ENCODE measurements at regions of chr4 and their contacts with region 1.

Region 1: GRCh38 chr4:30461218-30461617 is 259.0 kb upstream of the PCDH7 start:
- DNase-seq: peak; percentile 7
- CTCF ChIP-seq: no peak

Region 2: DNA sequence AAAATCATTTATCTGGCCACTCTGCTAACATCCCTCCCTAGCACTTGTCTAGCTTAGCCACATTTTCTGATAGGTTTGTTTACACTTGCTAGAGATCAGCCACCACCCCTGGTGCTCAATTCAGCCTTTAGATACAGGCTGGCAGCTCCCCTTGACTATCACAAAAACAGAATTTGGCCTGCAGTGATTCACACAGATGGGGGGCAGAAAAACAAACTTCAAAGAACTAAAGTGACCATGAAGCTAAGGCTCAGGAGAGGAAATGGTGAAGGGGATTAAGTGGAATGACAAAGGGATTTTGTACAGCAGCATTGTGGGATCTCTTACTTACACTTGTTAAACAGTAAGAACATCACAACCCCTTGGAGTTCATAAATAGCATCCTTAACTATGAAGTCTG is 1459.1 kb before region 1 on chr4:
- CTCF ChIA-PET with region 1: no interaction called
- POLR2A ChIA-PET with region 1: no interaction called
- DNase-seq: no peak
- CTCF ChIP-seq: no peak

Region 3: DNA sequence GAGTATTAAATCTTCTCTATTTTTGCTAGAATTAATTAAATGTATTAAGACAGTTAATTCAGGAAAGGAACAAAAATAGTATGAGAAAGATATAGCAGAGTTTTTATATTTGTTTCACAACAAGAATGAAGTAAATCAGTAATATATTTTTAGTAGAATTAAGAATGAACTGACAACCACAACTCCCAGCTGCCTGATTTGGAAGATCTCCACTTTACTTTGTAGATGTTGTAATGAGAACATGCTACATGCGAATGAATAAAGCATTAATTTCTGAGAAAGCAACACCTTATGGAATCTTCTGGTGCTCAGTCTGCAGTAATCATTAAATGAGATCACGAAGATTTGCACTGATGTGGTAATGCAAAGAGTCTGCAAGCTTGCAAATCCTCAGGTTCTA is 436.7 kb before region 1 on chr4:
- CTCF ChIA-PET with region 1: no interaction called
- POLR2A ChIA-PET with region 1: no interaction called
- DNase-seq: no peak
- CTCF ChIP-seq: no peak

Region 4: DNA sequence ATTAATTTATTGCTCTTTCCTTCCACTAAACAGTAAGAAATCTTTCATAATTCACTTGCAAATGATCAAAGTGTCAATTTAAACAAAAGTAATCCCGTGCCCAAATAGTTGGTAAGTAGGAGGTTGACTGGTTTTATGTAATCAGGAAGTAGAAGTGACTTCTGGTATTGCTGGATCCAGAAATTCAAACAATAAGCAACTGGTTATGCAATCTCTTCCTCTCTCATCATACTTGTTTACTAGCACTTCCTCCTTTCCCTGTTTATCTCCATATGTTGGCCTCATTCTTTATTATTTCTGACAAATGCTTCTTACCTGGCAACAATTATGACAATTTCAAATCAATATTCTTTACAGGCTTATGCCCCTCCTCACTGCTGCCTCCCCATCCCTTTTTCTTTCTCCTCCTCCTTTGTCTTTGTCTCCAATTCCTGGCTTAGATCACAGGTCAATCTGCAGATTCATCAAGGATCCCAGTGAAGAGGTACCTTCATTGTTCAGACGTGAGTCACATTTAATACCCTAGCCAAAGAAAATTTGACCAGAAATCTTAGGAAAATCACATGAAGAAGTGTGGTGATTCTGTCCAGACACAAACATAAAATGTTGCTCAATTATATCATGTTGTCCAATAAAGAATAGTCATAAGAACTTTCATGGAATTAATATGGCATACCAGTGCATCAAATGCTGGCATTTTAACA is 64.3 kb before region 1 on chr4:
- CTCF ChIA-PET with region 1: no interaction called
- POLR2A ChIA-PET with region 1: no interaction called
- DNase-seq: no peak
- CTCF ChIP-seq: no peak

Region 5: DNA sequence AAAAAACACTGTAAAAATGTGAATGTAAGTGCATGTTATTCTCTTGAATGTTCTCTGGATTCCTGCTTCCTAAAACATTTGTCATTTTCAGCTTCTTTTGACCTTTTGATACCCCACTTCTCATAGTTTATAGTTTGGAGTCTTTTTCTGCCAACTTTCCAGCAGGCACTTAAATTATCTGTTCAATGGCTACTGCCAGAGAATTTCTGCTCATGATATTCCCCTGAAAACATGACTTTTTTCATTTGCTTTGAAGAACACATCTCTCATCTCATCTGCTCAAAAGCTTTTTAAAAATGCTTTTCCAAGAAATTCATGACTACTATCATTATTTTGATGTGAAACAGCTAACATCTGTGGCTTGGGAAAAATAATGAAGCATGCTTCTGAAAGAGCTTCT is 10.7 kb before region 1 on chr4:
- CTCF ChIA-PET with region 1: interaction called, 14 read pairs
- POLR2A ChIA-PET with region 1: no interaction called
- DNase-seq: no peak
- CTCF ChIP-seq: no peak

Measured in GM10248 (cell line).